Activated CD4-positive, alpha-beta memory T cell treated with anti-CD3 and anti-CD28 coated beads for 36 hours (primary cell): ENCODE measurements at regions of chr20 and their contacts with region 1.

Region 1: GRCh38 chr20:47663333-47664067 is 121.8 kb downstream of the SULF2 start:
- DNase-seq: peak; percentile 85
- H3K4me3 Mint-ChIP-seq: no peak overlapping the region
- H3K27ac Mint-ChIP-seq: no peak overlapping the region
- H3K4me1 Mint-ChIP-seq: peaks cover 2% of the 10 kb centered on the region
- H3K27me3 Mint-ChIP-seq: no peaks in the 10 kb centered on the region

Region 2: DNA sequence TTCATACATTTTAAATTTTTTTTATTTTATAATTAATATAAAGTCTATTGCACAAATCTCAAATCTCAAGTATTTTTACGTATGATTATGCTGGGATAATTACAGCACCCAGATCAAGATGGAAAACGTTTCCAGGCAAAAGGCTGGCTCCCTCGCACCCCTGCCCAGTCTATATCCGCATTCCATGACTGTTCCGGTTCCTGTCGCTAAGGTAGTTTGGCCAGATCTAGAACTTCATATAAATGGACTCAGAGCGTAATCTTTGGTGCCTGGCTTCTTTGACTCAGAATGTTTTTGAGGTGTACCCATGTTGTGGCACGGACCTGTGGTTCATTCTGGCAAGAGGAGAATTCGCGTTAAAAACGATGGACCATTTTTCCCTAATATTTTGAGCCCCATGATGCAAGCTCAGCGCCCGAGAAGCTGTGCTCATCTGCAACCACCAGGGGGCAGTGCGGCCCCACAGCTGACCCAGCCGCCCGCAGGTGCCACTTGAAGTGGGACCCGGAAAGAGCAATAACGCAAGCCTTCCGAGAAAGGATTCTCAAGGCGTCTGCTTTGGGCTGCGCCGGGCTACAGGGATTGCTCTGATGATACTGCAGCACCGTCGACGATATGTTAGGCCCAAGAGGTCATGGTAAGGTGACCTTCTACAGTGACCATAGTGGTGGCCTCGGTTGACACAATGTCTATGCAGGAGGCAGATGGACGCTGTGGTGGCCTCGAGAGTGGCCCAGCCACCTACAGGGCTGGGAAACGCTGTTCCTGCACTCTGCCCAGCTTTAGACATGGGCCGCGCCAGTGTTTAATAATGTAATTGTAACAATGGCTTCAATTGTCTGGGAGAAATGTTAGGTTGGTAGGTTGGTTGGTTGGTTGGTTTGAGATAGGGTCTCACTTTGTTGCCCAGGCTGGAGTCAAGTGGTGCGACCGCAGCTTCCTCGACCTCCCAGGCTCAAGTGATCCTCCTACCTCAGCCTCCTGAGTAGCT is 467.1 kb before region 1 on chr20:
- CTCF ChIA-PET with region 1: interaction called, 4 read pairs
- POLR2A ChIA-PET with region 1: no interaction called
- intact Hi-C with region 1: loop called (anchors 10 kb)
- DNase-seq: peak; percentile 88
- H3K4me3 Mint-ChIP-seq: no peak overlapping the region
- H3K27ac Mint-ChIP-seq: no peak overlapping the region
- H3K4me1 Mint-ChIP-seq: peaks cover 15% of the 10 kb centered on the region
- H3K27me3 Mint-ChIP-seq: peaks cover 3% of the 10 kb centered on the region

Region 3: DNA sequence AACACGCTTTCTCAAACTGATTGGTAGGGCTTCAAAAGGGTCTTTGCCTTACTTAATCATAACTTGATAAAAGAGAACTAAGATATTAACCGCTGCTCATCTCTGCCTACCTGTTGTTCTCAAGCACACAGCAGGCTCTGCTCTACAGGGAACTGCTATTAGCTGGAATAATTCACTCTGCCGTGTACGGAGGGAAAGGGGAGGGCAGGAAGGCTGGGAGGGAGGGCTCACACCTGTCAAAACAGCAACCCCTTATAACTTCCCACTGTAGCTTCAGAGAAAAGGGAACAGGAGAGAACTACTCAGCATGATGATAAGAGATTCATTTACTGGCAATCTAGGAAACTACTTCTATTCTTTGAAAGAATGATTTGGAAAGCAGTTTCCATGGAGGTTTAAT is 382.1 kb before region 1 on chr20:
- CTCF ChIA-PET with region 1: no interaction called
- POLR2A ChIA-PET with region 1: no interaction called
- intact Hi-C with region 1: no loop called
- DNase-seq: no peak
- H3K4me3 Mint-ChIP-seq: no peak overlapping the region
- H3K27ac Mint-ChIP-seq: no peak overlapping the region
- H3K4me1 Mint-ChIP-seq: peaks cover 5% of the 10 kb centered on the region
- H3K27me3 Mint-ChIP-seq: no peaks in the 10 kb centered on the region

Region 4: DNA sequence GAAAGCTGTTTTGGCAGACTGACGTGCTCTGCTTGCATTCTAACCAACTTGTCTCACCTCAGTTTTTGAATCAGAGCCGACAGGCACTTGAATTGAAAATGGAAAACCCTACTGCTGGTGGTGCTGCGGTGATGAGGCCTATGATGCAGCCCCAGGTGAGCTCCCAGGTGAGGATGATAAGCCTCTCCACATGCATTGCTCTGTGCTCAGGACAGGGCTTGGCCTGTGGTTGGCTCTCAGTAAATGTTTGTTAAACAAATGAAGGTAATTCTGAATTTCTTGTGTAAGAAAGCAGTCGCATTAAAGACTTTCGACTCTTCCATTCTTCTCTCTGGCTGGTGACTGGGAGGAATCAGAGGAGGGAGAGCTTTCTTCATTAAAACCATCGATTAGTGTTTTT is 14.6 kb before region 1 on chr20:
- CTCF ChIA-PET with region 1: interaction called, 18 read pairs
- POLR2A ChIA-PET with region 1: interaction called, 3 read pairs
- intact Hi-C with region 1: no loop called
- DNase-seq: no peak
- H3K4me3 Mint-ChIP-seq: no peak overlapping the region
- H3K27ac Mint-ChIP-seq: no peak overlapping the region
- H3K4me1 Mint-ChIP-seq: no peaks in the 10 kb centered on the region
- H3K27me3 Mint-ChIP-seq: no peaks in the 10 kb centered on the region

Region 5: GRCh38 chr20:47677635-47678453 is 14.3 kb after region 1 on chr20:
- CTCF ChIA-PET with region 1: interaction called, 20 read pairs
- POLR2A ChIA-PET with region 1: no interaction called
- intact Hi-C with region 1: no loop called
- DNase-seq: peak; percentile 78
- H3K4me3 Mint-ChIP-seq: no peak overlapping the region
- H3K27ac Mint-ChIP-seq: no peak overlapping the region
- H3K4me1 Mint-ChIP-seq: no peaks in the 10 kb centered on the region
- H3K27me3 Mint-ChIP-seq: no peaks in the 10 kb centered on the region

Region 6: GRCh38 chr20:47774131-47774996 is 110.9 kb after region 1 on chr20:
- CTCF ChIA-PET with region 1: no interaction called
- POLR2A ChIA-PET with region 1: no interaction called
- intact Hi-C with region 1: no loop called
- DNase-seq: no peak
- H3K4me3 Mint-ChIP-seq: no peak overlapping the region
- H3K27ac Mint-ChIP-seq: no peak overlapping the region
- H3K4me1 Mint-ChIP-seq: no peaks in the 10 kb centered on the region
- H3K27me3 Mint-ChIP-seq: peaks cover 2% of the 10 kb centered on the region